ENCODE measurements at regions of chr9 and their contacts with region 1.

Region 1: DNA sequence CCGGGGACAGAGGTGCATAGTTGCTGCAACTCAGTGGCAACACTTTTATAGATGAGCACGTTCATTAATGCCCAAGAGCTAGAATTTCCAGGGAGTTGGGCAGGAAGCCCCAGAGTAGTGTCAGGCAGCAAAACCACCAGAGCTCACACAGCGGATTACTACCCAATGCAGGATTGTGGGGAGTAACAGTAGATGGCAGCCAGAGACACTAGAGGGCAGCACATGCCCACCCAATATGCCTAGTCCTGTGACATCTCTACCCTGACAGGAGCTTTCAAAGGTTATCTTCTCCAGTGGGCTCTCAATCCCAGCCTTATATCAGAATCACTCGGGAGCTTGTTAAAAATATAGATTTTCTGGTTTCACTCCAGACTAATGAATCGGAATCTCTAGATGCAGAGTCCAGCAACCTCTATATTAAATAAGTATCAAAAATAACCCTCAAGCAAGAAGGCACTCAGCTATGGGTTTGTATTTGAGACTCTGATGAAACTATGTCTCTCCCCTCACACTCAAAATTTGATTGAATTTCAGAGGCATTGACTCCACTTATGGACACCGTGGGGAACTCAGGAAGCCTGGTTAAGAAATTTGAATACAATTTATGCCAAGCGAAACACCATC is 58.4 kb upstream of the PHF24 start:
- DNase-seq: peak; percentile 60
- H3K4me3 ChIP-seq: no peak overlapping the region
- H3K27ac ChIP-seq: no peak overlapping the region
- H3K4me1 ChIP-seq: no peaks in the 10 kb centered on the region
- H3K27me3 ChIP-seq: peaks cover 2% of the 10 kb centered on the region
- CTCF ChIP-seq: peak; percentile 74 to 89

Region 2: DNA sequence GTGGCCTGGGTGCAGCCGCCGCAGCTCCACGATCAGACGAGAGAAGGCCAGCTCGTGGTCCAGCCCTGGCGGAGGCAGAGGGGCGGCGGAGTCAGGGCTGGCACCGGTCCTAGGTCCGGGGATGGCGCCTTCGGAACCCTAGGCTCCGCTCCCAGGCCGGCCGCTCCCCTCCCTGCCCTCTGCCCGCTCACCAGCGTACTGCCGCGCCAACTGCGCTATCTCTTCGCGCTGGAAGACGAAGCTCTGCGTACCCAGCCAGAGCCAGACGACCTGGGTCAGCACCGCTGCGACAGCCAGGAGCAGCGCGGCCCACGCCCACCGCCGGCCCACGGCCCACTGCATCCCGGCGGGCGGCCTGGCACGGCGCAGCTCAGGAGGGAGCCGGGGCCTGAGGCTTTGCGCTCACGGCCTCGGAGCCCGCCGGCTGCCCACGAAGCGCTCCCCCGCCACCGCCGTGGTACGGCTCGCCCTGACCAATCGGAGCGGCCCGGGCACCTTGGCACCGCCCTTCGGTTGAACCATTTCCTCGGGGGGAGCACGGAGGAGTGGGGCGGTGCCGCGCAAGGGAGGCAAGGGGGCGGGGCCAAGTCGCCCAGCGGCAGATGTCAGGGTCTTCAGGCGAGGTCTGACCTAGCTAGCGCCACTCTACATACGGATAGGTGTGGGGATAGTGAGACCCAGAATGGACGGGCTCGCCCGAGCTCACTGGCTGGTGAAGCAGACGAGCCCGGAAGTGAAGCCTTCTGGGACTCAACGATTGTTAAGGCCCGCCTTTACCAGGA is 262.1 kb before region 1 on chr9 and contains the start of gene SIGMAR1:
- CTCF ChIA-PET with region 1: no interaction called
- dilution Hi-C with region 1: no loop called
- in situ Hi-C with region 1: no loop called
- intact Hi-C with region 1: no loop called
- DNase-seq: peak; percentile 94
- H3K4me3 ChIP-seq: peak within 1 kb of the TSS; percentile 62 to 91 (median 88)
- H3K27ac ChIP-seq: peak within 1 kb of the TSS; percentile 35
- H3K4me1 ChIP-seq: peaks cover 4% of the 10 kb centered on the region
- H3K27me3 ChIP-seq: no peaks in the 10 kb centered on the region
- CTCF ChIP-seq: no peak
- total RNA-seq, gene SIGMAR1: 83.0 to 131 TPM

Region 3: GRCh38 chr9:34989003-34989945 is 89.6 kb after region 1 on chr9 and contains the start of gene DNAJB5:
- CTCF ChIA-PET with region 1: interaction called, 10 read pairs
- dilution Hi-C with region 1: no loop called
- in situ Hi-C with region 1: loop called in 1 of 2 experiments (anchors 10 kb)
- intact Hi-C with region 1: loop called (anchors 1 kb)
- DNase-seq: peak; percentile 99
- H3K4me3 ChIP-seq: peak within 1 kb of the TSS; percentile 63 to 88 (median 72)
- H3K27ac ChIP-seq: peak within 1 kb of the TSS; percentile 52
- H3K4me1 ChIP-seq: peaks cover 41% of the 10 kb centered on the region
- H3K27me3 ChIP-seq: no peaks in the 10 kb centered on the region
- CTCF ChIP-seq: no peak
- total RNA-seq, gene DNAJB5: 8.4 to 10.0 TPM

Region 4: GRCh38 chr9:35051069-35051967 is 151.7 kb after region 1 on chr9:
- CTCF ChIA-PET with region 1: interaction called, 29 read pairs
- dilution Hi-C with region 1: no loop called
- in situ Hi-C with region 1: loop called in 1 of 2 experiments (anchors 10 kb)
- intact Hi-C with region 1: loop called (anchors 1 kb)
- DNase-seq: peak; percentile 27
- H3K4me3 ChIP-seq: no peak overlapping the region
- H3K27ac ChIP-seq: no peak overlapping the region
- H3K4me1 ChIP-seq: peaks cover 4% of the 10 kb centered on the region
- H3K27me3 ChIP-seq: no peaks in the 10 kb centered on the region
- CTCF ChIP-seq: peak; percentile 61 to 68

Region 5: GRCh38 chr9:35116898-35117551 is 217.4 kb after region 1 on chr9:
- CTCF ChIA-PET with region 1: interaction called, 3 read pairs
- dilution Hi-C with region 1: no loop called
- in situ Hi-C with region 1: no loop called
- intact Hi-C with region 1: loop called (anchors 5 kb)
- DNase-seq: peak; percentile 84
- H3K4me3 ChIP-seq: peak overlapping the region; percentile 44 to 84 (median 60)
- H3K27ac ChIP-seq: no peak overlapping the region
- H3K4me1 ChIP-seq: peaks cover 23% of the 10 kb centered on the region
- H3K27me3 ChIP-seq: no peaks in the 10 kb centered on the region
- CTCF ChIP-seq: peak; percentile 95 to 99

Region 6: GRCh38 chr9:35470894-35471293 is 571.2 kb after region 1 on chr9:
- CTCF ChIA-PET with region 1: interaction called, 3 read pairs
- dilution Hi-C with region 1: no loop called
- in situ Hi-C with region 1: loop called (anchors 10 kb)
- intact Hi-C with region 1: no loop called
- DNase-seq: peak; percentile 67
- H3K4me3 ChIP-seq: no peak overlapping the region
- H3K27ac ChIP-seq: no peak overlapping the region
- H3K4me1 ChIP-seq: no peaks in the 10 kb centered on the region
- H3K27me3 ChIP-seq: no peaks in the 10 kb centered on the region
- CTCF ChIP-seq: no peak